ENCODE measurements at regions of chr10 and their contacts with region 1.

Region 1: GRCh38 chr10:99620713-99621453 is 644 bp upstream of the SLC25A28 start:
- DNase-seq: peak; percentile 87
- ATAC-seq: peak; percentile 82 to 93 (median 84)
- H3K4me3 ChIP-seq: peak overlapping the region; percentile 52
- H3K4me3 Mint-ChIP-seq: peak overlapping the region; percentile 94
- H3K27ac ChIP-seq: peak overlapping the region; percentile 89
- H3K27ac Mint-ChIP-seq: peak overlapping the region; percentile 87 to 91
- H3K4me1 ChIP-seq: peaks cover 16% of the 10 kb centered on the region
- H3K4me1 Mint-ChIP-seq: peaks cover 36 to 39% of the 10 kb centered on the region in 2 donors
- H3K27me3 ChIP-seq: no peaks in the 10 kb centered on the region
- H3K27me3 Mint-ChIP-seq: peaks cover 0 to 7% of the 10 kb centered on the region in 2 donors
- CTCF ChIP-seq: no peak

Region 2: GRCh38 chr10:99430451-99431189 is 190.3 kb before region 1 on chr10 and contains the start of gene GOT1:
- intact Hi-C with region 1: loop called (anchors 1 kb)
- DNase-seq: peak; percentile 88 to 97
- ATAC-seq: peak; percentile 92 to 98 (median 93)
- H3K4me3 ChIP-seq: peak within 1 kb of the TSS; percentile 70
- H3K4me3 Mint-ChIP-seq: peak within 1 kb of the TSS; percentile 96
- H3K27ac ChIP-seq: peak within 1 kb of the TSS; percentile 64
- H3K27ac Mint-ChIP-seq: peak within 1 kb of the TSS; percentile 91 to 93
- H3K4me1 ChIP-seq: peaks cover 16% of the 10 kb centered on the region
- H3K4me1 Mint-ChIP-seq: peaks cover 37 to 44% of the 10 kb centered on the region in 2 donors
- H3K27me3 ChIP-seq: no peaks in the 10 kb centered on the region
- H3K27me3 Mint-ChIP-seq: no peaks in the 10 kb centered on the region
- CTCF ChIP-seq: no peak
- total RNA-seq, gene GOT1: 8.5 to 15.1 (median 8.5) TPM

Region 3: DNA sequence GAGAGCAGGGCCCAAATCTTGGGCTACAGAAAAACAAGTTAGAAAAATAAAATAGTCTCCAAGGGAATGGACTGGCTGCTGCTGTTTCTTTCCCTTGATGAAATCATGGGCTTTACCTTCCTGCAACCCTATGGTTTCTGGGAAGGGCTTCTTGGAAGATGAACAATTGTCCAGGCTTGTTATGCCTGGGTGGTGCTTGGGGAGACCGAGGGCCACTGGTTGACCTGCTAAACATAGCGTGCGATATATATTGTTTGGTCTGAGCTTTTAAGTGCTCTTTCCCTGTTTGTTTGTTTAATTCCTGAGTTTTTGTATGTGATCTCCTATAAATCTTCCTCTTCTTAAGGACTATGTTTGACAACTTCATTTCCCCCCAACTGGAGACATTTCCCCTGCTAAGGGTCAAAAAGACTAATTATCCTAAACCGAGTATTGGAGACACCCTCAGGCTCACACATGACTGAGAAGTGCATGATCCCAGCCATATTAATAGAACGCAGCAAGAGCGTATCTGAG is 38.6 kb before region 1 on chr10:
- intact Hi-C with region 1: no loop called
- DNase-seq: no peak
- ATAC-seq: no peak
- H3K4me3 ChIP-seq: no peak overlapping the region
- H3K4me3 Mint-ChIP-seq: no peak overlapping the region
- H3K27ac ChIP-seq: no peak overlapping the region
- H3K27ac Mint-ChIP-seq: no peak overlapping the region
- H3K4me1 ChIP-seq: no peaks in the 10 kb centered on the region
- H3K4me1 Mint-ChIP-seq: no peaks in the 10 kb centered on the region
- H3K27me3 ChIP-seq: no peaks in the 10 kb centered on the region
- H3K27me3 Mint-ChIP-seq: peaks cover 8 to 24% of the 10 kb centered on the region in 2 donors
- CTCF ChIP-seq: no peak

Region 4: DNA sequence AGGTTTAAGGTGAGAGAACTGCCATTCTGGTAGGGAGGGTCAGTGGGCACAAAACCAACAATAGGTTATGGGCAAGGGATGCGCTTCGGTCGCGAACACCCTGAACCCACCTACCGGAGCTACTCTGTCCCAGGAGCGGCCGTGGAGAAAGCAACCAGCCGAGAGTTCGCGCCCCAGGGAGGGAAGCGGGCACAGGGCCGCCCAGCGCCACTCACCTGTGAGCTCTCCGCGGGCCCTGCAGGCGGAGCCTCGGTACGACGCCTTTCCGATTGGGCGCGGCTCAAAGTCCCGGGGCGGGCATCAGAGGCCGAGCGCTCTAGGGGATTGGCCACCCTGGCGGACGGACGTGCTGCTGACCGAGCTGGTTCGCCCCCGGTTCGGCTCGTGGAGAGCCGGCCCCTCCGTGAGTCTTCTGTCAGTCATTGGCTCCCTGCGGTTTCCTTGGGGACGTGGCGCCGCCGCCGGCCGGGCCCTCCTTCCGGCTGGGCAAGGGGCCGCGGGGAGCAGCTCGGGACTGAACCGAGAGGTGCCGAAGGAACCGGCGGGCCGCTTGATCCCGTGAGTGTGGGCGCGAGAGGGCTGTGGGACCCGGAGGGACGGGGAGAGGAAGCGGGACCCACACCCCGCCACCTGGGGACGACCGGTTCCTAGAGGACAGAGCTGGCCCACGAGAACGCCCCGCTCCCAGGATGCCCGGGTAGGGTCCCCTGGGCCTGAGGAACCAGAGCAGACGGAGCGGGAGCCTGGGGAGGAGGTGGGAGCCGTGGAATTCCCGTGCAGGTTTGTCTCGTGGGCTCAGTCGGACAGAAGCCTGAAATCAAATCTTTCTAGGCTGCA is 38.4 kb after region 1 on chr10 and contains the start of gene ENTPD7:
- intact Hi-C with region 1: loop called (anchors 1 kb)
- DNase-seq: peak; percentile 83 to 91
- ATAC-seq: peak; percentile 97 to 99 (median 98)
- H3K4me3 ChIP-seq: peak within 1 kb of the TSS; percentile 68
- H3K4me3 Mint-ChIP-seq: peak within 1 kb of the TSS; percentile 96
- H3K27ac ChIP-seq: peak within 1 kb of the TSS; percentile 27
- H3K27ac Mint-ChIP-seq: peak within 1 kb of the TSS; percentile 79 to 85
- H3K4me1 ChIP-seq: peaks cover 14% of the 10 kb centered on the region
- H3K4me1 Mint-ChIP-seq: peaks cover 22 to 24% of the 10 kb centered on the region in 2 donors
- H3K27me3 ChIP-seq: no peaks in the 10 kb centered on the region
- H3K27me3 Mint-ChIP-seq: peaks cover 11 to 12% of the 10 kb centered on the region in 2 donors
- CTCF ChIP-seq: no peak
- total RNA-seq, gene ENTPD7: 3.7 to 6.3 (median 5.6) TPM

Region 5: DNA sequence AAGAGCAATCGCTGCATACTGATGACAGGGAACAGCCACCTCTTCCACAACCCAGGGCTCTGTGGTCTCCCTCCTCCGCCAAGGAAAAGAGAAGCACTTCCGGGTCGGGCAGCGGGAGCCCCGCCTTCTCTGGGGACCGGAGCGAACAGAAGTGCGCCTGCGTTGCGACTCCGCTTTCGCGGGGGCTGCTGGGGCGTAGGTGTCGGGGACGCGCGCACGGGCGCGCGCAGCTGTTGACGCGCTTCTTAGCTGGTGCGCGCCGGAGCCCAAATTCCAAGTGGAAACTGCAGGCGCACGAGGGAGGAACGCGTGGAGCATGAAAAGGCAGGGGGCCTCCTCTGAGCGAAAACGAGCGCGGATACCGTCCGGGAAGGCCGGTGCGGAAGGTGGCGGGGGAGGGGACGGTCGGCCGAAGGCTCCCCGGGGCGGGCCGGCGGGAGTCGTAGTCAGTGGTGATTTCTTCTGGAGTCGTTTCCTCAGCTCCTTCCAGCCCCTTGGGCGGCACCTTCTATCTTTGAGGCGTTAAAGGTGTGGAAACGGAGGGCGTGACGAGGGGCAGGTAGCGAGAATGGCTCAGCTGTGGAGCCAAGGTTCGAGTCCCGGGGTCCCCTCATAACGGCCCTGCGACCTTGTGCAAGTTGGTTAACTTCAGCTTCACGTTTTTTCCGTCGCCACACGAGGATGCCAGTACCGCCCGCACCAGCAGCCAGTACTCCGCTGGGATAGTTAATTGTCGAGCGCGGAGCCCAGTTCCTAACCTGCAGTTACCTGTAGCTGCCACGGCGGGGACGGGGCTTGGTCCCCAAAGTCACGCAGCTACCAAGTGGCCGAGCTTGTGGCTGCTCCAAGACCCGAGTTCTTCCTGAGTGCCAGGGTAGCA is 111.4 kb after region 1 on chr10 and contains the starts of genes COX15 and CUTC:
- intact Hi-C with region 1: loop called (anchors 1 kb)
- DNase-seq: peak; percentile 93 to 98
- ATAC-seq: peak; percentile 93 to 96 (median 94)
- H3K4me3 ChIP-seq: peak within 1 kb of the TSS; percentile 67
- H3K4me3 Mint-ChIP-seq: peak within 1 kb of the TSS; percentile 100
- H3K27ac ChIP-seq: peak within 1 kb of the TSS; percentile 70
- H3K27ac Mint-ChIP-seq: peak within 1 kb of the TSS; percentile 98 to 100
- H3K4me1 ChIP-seq: peaks cover 20% of the 10 kb centered on the region
- H3K4me1 Mint-ChIP-seq: peaks cover 27 to 43% of the 10 kb centered on the region in 2 donors
- H3K27me3 ChIP-seq: no peaks in the 10 kb centered on the region
- H3K27me3 Mint-ChIP-seq: no peaks in the 10 kb centered on the region
- CTCF ChIP-seq: peak; percentile 31
- total RNA-seq, gene COX15: 17.1 to 27.9 (median 20.3) TPM
- total RNA-seq, gene CUTC: 21.4 to 28.1 (median 23.5) TPM

Measured in natural killer cell (primary cell).